ENCODE measurements at regions of chr17 and their contacts with region 1.

Region 1: GRCh38 chr17:57875309-57876115 is 25.7 kb upstream of the MRPS23 start:
- DNase-seq: peak; percentile 99
- ATAC-seq: peak; percentile 75
- H3K4me3 ChIP-seq: no peak overlapping the region
- H3K27ac ChIP-seq: peak overlapping the region; percentile 89
- H3K4me1 ChIP-seq: peaks cover 51% of the 10 kb centered on the region
- H3K27me3 ChIP-seq: no peaks in the 10 kb centered on the region
- CTCF ChIP-seq: peak; percentile 82
- POLR2A ChIP-seq: peak; percentile 55
- RAD21 ChIP-seq: peak; percentile 77

Region 2: GRCh38 chr17:57422574-57423164 is 452.8 kb before region 1 on chr17:
- CTCF ChIA-PET with region 1: no interaction called
- POLR2A ChIA-PET with region 1: no interaction called
- dilution Hi-C with region 1: no loop called
- in situ Hi-C with region 1: no loop called
- intact Hi-C with region 1: no loop called
- DNase-seq: peak; percentile 57
- ATAC-seq: no peak
- H3K4me3 ChIP-seq: no peak overlapping the region
- H3K27ac ChIP-seq: no peak overlapping the region
- H3K4me1 ChIP-seq: peaks cover 7% of the 10 kb centered on the region
- H3K27me3 ChIP-seq: no peaks in the 10 kb centered on the region
- CTCF ChIP-seq: no peak
- POLR2A ChIP-seq: no peak
- RAD21 ChIP-seq: no peak

Region 3: GRCh38 chr17:57861000-57861789 is 14.3 kb before region 1 on chr17:
- CTCF ChIA-PET with region 1: interaction called, 7 read pairs
- POLR2A ChIA-PET with region 1: interaction called, 5 read pairs
- dilution Hi-C with region 1: no loop called
- in situ Hi-C with region 1: no loop called
- intact Hi-C with region 1: loop called (anchors 1 kb)
- DNase-seq: peak; percentile 60
- ATAC-seq: peak; percentile 67
- H3K4me3 ChIP-seq: peak overlapping the region; percentile 28; the same call in 1 of the 2 replicates
- H3K27ac ChIP-seq: peak overlapping the region; percentile 75
- H3K4me1 ChIP-seq: peaks cover 18% of the 10 kb centered on the region
- H3K27me3 ChIP-seq: no peaks in the 10 kb centered on the region
- CTCF ChIP-seq: no peak
- POLR2A ChIP-seq: no peak
- RAD21 ChIP-seq: peak; percentile 2; the same call in 1 of the 2 replicates

Region 4: GRCh38 chr17:57935833-57936807 is 60.6 kb after region 1 on chr17:
- CTCF ChIA-PET with region 1: interaction called, 6 read pairs
- POLR2A ChIA-PET with region 1: no interaction called
- dilution Hi-C with region 1: no loop called
- in situ Hi-C with region 1: no loop called
- intact Hi-C with region 1: loop called (anchors 2 kb)
- DNase-seq: peak; percentile 55
- ATAC-seq: peak; percentile 73
- H3K4me3 ChIP-seq: no peak overlapping the region
- H3K27ac ChIP-seq: peak overlapping the region; percentile 98
- H3K4me1 ChIP-seq: peaks cover 29% of the 10 kb centered on the region
- H3K27me3 ChIP-seq: no peaks in the 10 kb centered on the region
- CTCF ChIP-seq: no peak
- POLR2A ChIP-seq: no peak
- RAD21 ChIP-seq: no peak

Region 5: GRCh38 chr17:57955183-57955931 is 79.8 kb after region 1 on chr17 and contains the start of gene CUEDC1:
- CTCF ChIA-PET with region 1: interaction called, 5 read pairs
- POLR2A ChIA-PET with region 1: interaction called, 15 read pairs
- dilution Hi-C with region 1: no loop called
- in situ Hi-C with region 1: no loop called
- intact Hi-C with region 1: loop called (anchors 2 kb)
- DNase-seq: peak; percentile 39
- ATAC-seq: peak; percentile 84
- H3K4me3 ChIP-seq: peak within 1 kb of the TSS; percentile 93
- H3K27ac ChIP-seq: peak within 1 kb of the TSS; percentile 79
- H3K4me1 ChIP-seq: peaks cover 27% of the 10 kb centered on the region
- H3K27me3 ChIP-seq: no peaks in the 10 kb centered on the region
- CTCF ChIP-seq: peak; percentile 52
- POLR2A ChIP-seq: no peak
- RAD21 ChIP-seq: peak; percentile 34
- total RNA-seq, gene CUEDC1: 4.1 and 4.2 TPM in 2 replicates

Region 6: DNA sequence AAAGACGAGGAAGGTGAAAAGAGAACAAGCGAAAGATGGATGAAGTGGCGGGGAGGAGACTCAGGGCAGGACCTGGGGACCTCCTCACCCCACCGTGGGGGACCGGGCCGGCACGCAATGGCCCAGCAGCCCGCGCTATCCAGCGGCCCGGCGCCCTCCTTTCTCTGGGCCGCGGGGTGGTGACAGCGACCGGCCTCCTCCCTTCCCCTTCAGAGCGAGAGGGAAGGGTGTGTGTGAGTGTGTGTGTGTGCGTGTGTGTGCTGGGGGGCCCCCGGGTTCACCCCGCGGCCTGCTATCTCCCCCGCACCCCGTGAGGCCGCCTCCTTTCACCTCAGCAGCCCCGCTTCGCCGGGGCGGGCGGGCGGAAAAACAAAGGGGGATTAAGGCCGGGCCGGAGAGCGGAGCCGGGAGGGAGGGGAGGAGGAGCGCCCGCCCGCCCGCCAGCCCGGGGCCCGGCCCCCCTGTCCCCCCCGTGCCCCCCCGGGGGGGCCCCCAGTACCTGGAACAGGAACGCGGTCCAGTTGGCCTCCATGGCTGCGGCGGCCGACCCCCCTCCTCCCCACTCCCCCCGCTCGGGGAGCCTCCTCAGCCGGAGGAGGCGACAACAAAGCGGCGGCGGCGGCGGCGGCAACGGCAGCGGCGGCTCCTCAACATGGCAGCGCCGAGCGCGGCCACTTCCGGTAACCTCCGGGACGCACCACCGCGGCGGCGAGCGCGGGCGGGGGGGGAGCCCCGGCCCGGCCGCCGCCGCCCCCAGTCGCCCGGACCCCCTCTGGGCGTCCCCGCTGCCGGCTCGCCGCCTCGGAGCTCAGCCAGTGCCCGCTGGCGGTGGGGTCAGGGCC is 112.3 kb after region 1 on chr17 and contains the start of gene VEZF1:
- CTCF ChIA-PET with region 1: interaction called, 6 read pairs
- POLR2A ChIA-PET with region 1: interaction called, 7 read pairs
- dilution Hi-C with region 1: loop called (anchors 25 kb)
- in situ Hi-C with region 1: no loop called
- intact Hi-C with region 1: loop called (anchors 1 kb)
- DNase-seq: peak; percentile 44
- ATAC-seq: peak; percentile 60
- H3K4me3 ChIP-seq: peak within 1 kb of the TSS; percentile 99
- H3K27ac ChIP-seq: peak within 1 kb of the TSS; percentile 90
- H3K4me1 ChIP-seq: peaks cover 23% of the 10 kb centered on the region
- H3K27me3 ChIP-seq: no peaks in the 10 kb centered on the region
- CTCF ChIP-seq: no peak
- POLR2A ChIP-seq: no peak; the same call in none of the 2 replicates
- RAD21 ChIP-seq: no peak
- total RNA-seq, gene VEZF1: 40.3 and 42.1 TPM in 2 replicates

Region 7: GRCh38 chr17:58060596-58061191 is 185.2 kb after region 1 on chr17:
- CTCF ChIA-PET with region 1: no interaction called
- POLR2A ChIA-PET with region 1: no interaction called
- dilution Hi-C with region 1: no loop called
- in situ Hi-C with region 1: no loop called
- intact Hi-C with region 1: no loop called
- DNase-seq: peak; percentile 13
- ATAC-seq: peak; percentile 54
- H3K4me3 ChIP-seq: no peak overlapping the region
- H3K27ac ChIP-seq: no peak overlapping the region
- H3K4me1 ChIP-seq: peaks cover 2% of the 10 kb centered on the region; the same call in 1 of the 2 replicates
- H3K27me3 ChIP-seq: peaks cover 17% of the 10 kb centered on the region
- CTCF ChIP-seq: no peak
- POLR2A ChIP-seq: no peak
- RAD21 ChIP-seq: no peak

Region 8: GRCh38 chr17:58189436-58190146 is 314.1 kb after region 1 on chr17:
- CTCF ChIA-PET with region 1: no interaction called
- POLR2A ChIA-PET with region 1: no interaction called
- dilution Hi-C with region 1: no loop called
- in situ Hi-C with region 1: no loop called
- intact Hi-C with region 1: no loop called
- DNase-seq: peak; percentile 81
- ATAC-seq: peak; percentile 90
- H3K4me3 ChIP-seq: no peak overlapping the region
- H3K27ac ChIP-seq: no peak overlapping the region
- H3K4me1 ChIP-seq: no peaks in the 10 kb centered on the region
- H3K27me3 ChIP-seq: peaks cover 13% of the 10 kb centered on the region
- CTCF ChIP-seq: no peak
- POLR2A ChIP-seq: no peak
- RAD21 ChIP-seq: no peak

Region 9: GRCh38 chr17:58308173-58308984 is 432.9 kb after region 1 on chr17:
- CTCF ChIA-PET with region 1: no interaction called
- POLR2A ChIA-PET with region 1: no interaction called
- dilution Hi-C with region 1: no loop called
- in situ Hi-C with region 1: no loop called
- intact Hi-C with region 1: no loop called
- DNase-seq: no peak
- ATAC-seq: no peak
- H3K4me3 ChIP-seq: no peak overlapping the region
- H3K27ac ChIP-seq: no peak overlapping the region
- H3K4me1 ChIP-seq: no peaks in the 10 kb centered on the region
- H3K27me3 ChIP-seq: peaks cover 2% of the 10 kb centered on the region; the same call in 1 of the 2 replicates
- CTCF ChIP-seq: peak; percentile 20; the same call in 1 of the 2 replicates
- POLR2A ChIP-seq: no peak
- RAD21 ChIP-seq: no peak

Measured in IMR-90 (cell line).